Endothelial cell of umbilical vein (primary cell): ENCODE measurements at regions of chr22 and their contacts with region 1.

Region 1: DNA sequence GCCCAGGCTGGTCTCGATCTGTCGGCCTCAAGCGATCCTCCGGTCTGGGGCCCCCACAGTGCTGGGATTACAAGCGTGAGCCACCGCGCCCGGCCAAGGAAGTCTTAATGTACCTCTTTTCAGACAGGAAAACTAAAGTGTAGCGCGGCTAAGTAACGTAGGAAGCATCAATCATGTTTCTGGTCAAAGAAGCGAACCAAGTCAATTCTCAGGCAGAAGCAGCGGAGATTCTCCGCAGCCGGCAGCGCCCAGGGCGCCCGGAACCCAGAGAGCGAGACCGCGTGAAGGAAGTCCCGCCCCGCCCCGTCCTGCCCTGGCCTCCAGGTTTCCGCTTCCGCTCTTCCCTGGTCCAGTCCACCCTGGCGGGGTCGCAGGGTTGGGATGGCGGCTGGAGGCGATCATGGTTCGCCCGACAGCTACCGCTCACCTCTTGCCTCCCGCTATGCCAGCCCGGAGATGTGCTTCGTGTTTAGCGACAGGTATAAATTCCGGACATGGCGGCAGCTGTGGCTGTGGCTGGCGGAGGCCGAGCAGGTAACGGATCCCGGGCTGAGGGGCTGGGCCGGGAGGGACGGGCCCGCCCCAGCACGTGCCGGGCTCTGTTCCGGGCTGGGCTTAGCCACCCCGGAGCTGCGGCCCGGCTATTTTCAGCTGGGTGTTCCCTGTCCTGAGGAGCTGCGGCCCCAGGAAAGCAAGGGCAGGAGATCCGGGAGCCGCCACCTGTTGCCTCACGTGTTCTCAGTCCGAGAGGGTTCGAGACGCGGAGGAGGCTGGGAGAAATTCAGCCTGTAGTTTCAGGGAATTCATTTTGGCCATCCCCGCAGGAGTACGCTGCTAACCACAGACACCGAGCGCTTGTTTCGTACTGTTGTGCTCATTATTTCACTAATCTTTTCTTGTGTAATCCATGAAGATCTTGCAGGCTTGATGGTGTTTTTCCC is at the start of gene ADSL:
- DNase-seq: peak; percentile 85
- H3K4me3 ChIP-seq: peak within 1 kb of the TSS; percentile 76 to 98 (median 90)
- H3K27ac ChIP-seq: peak within 1 kb of the TSS; percentile 51
- H3K4me1 ChIP-seq: peaks cover 16% of the 10 kb centered on the region
- H3K27me3 ChIP-seq: no peaks in the 10 kb centered on the region
- CTCF ChIP-seq: peak in 1 of 2 donors; percentile 34
- POLR2A ChIP-seq: peak; percentile 97
- total RNA-seq, gene ADSL: 86.2 and 103 TPM in 2 replicates

Region 2: DNA sequence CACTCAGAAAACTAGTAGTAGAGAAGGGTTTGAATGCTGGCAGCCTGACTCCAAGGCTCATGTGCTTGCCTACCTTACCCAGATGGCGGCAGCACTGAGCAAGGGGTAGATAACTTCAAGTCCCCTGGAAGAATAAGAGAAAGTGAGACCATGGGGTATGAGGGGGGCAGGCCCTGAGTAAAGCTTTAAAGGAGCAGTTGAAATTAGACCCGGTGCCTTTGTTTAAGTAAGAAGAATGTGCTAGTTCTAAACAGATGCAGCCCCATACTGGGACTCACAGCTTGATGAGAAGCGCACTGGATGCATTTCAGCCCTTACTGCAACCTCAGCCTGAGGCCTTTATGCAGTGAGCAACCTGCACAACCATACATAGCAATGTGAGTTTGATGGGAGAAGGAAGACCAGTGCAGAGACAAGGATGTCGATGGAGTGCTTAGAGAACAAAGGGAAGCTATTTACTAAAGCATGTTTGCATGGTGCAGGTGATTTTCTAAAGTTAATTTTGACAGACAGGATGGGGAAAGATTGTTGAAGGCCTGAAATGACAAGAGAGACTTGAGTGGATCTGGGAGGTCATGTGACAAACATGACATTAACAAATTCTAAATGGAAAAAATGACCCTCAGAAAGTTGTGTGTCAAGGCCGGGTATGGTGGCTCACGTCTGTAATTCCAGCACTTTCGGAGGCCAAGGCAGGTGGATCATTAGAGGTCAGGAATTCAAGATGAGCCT is 413.4 kb before region 1 on chr22:
- CTCF ChIA-PET with region 1: no interaction called
- POLR2A ChIA-PET with region 1: no interaction called
- dilution Hi-C with region 1: no loop called
- intact Hi-C with region 1: loop called (anchors 2 kb)
- DNase-seq: peak; percentile 23
- H3K4me3 ChIP-seq: no peak overlapping the region
- H3K27ac ChIP-seq: no peak overlapping the region
- H3K4me1 ChIP-seq: no peaks in the 10 kb centered on the region
- H3K27me3 ChIP-seq: peaks cover 38 to 47% of the 10 kb centered on the region in 2 experiments
- CTCF ChIP-seq: peak; percentile 49 to 54
- POLR2A ChIP-seq: no peak

Region 3: DNA sequence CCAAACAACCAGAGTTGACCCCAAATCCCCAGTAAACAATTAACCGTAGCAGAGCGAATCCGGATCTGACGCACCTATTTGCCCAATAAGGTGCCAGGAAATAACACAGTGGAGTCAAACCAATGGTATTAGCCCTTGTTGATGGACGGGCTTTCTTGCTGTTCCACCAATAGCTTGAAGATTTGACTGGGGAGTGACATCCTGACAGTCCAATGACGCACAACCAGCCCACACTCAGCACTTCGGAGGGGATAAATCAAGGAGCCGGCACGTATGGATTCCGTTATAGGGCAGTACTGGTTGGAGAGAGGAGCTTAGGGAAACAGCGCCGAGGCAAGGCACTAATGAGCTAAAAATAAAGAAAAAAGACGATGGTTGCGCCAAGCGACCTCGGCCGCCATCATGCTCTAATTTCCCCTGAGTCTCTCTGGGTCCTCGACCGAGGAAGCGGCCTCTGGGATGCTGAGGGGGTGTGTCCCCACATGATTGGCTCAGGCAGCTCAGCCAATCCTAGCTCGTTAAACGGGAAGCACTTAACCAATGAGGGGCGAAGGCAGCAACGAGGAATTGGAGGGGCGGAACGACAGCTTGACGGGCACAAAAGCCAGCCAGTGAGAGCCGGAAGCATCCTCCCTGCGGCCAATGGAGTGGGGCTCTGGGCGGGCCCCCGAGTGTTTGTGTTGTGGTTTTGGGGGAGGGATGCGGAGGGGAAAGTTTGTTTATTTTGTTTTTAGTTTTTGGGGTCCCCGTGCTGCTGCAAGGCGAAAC is 302.2 kb before region 1 on chr22:
- CTCF ChIA-PET with region 1: interaction called, 31 read pairs
- POLR2A ChIA-PET with region 1: interaction called, 3 read pairs
- dilution Hi-C with region 1: no loop called
- intact Hi-C with region 1: loop called (anchors 1 kb)
- DNase-seq: peak; percentile 99
- H3K4me3 ChIP-seq: peak overlapping the region; percentile 48 to 95 (median 68)
- H3K27ac ChIP-seq: peak overlapping the region; percentile 87
- H3K4me1 ChIP-seq: peaks cover 19% of the 10 kb centered on the region
- H3K27me3 ChIP-seq: peaks cover 0 to 16% of the 10 kb centered on the region in 2 experiments
- CTCF ChIP-seq: no peak
- POLR2A ChIP-seq: no peak

Region 4: GRCh38 chr22:40161194-40161593 is 185.3 kb before region 1 on chr22:
- CTCF ChIA-PET with region 1: no interaction called
- POLR2A ChIA-PET with region 1: no interaction called
- dilution Hi-C with region 1: no loop called
- intact Hi-C with region 1: no loop called
- DNase-seq: no peak
- H3K4me3 ChIP-seq: no peak overlapping the region
- H3K27ac ChIP-seq: no peak overlapping the region
- H3K4me1 ChIP-seq: peaks cover 2% of the 10 kb centered on the region
- H3K27me3 ChIP-seq: no peaks in the 10 kb centered on the region
- CTCF ChIP-seq: no peak
- POLR2A ChIP-seq: no peak

Region 5: GRCh38 chr22:40177738-40178416 is 168.6 kb before region 1 on chr22 and contains the start of gene TNRC6B:
- CTCF ChIA-PET with region 1: interaction called, 33 read pairs
- POLR2A ChIA-PET with region 1: interaction called, 3 read pairs
- dilution Hi-C with region 1: no loop called
- intact Hi-C with region 1: loop called (anchors 1 kb)
- DNase-seq: peak; percentile 96
- H3K4me3 ChIP-seq: peak within 1 kb of the TSS; percentile 62 to 99 (median 93)
- H3K27ac ChIP-seq: peak within 1 kb of the TSS; percentile 90
- H3K4me1 ChIP-seq: peaks cover 37% of the 10 kb centered on the region
- H3K27me3 ChIP-seq: no peaks in the 10 kb centered on the region
- CTCF ChIP-seq: no peak
- POLR2A ChIP-seq: peak; percentile 99
- total RNA-seq, gene TNRC6B: 33.3 and 37.2 TPM in 2 replicates

Region 6: DNA sequence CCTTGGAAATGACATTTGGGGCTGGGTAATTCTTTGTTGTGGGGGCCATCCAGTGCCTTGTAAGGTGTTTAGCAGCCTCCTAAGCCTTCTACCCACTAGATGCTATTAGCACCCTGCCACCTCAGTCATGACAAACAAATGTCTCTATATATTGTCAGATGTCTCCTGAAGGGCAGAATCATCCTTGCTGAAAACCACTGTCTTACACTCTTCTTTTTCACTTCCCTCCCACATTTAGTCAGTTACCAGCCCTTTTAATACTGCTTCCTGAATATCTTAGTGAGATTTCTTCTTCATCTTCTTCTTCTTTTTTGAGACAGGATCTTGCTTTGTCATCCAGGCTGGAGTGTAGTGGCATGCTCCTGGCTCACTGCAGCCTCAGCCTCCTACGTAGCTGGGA is 135.6 kb before region 1 on chr22:
- CTCF ChIA-PET with region 1: interaction called, 17 read pairs
- POLR2A ChIA-PET with region 1: no interaction called
- dilution Hi-C with region 1: no loop called
- intact Hi-C with region 1: loop called (anchors 5 kb)
- DNase-seq: no peak
- H3K4me3 ChIP-seq: no peak overlapping the region
- H3K27ac ChIP-seq: no peak overlapping the region
- H3K4me1 ChIP-seq: peaks cover 24% of the 10 kb centered on the region
- H3K27me3 ChIP-seq: no peaks in the 10 kb centered on the region
- CTCF ChIP-seq: no peak
- POLR2A ChIP-seq: no peak

Region 7: DNA sequence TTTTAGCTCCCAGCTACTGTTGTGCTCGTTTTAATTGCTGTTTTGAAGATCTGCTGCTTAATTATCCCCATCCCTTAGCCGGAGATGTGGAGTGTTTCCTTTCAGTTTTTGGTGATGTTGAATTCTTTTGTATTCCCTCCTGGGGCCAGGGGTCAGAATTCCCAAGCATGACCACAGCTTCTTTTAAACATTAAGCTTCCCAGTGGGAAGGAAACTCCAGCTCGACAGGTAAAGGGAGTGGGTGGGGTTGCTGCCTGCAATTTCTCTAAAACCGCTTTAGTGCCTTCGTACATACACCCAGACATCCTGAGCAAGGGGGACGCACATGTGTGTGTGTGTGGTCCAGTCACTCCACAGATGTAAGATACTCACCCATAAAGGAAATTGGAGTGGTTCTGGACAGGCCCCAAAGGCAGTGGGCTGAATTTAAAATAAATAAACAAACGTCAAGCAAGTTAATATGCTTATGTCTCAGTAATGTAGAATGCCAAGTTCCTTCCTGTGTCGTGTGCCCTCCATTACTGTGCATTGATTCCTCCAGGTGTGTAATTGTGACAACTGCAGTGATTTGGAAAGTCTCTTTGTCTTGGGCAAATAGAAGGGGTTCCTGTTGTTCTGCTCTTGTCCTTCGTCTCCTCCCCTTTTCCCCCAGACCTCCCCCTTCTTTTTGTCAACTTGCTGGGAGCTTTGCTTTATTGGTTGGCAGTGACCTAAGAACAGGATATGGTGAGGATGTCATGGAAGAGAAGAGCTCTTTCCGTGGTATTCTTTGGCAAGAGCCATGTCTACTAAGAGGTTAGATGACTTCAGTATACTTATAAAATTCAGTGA is 19.3 kb before region 1 on chr22:
- CTCF ChIA-PET with region 1: interaction called, 16 read pairs
- POLR2A ChIA-PET with region 1: no interaction called
- dilution Hi-C with region 1: no loop called
- intact Hi-C with region 1: no loop called
- DNase-seq: peak; percentile 75
- H3K4me3 ChIP-seq: no peak overlapping the region
- H3K27ac ChIP-seq: peak overlapping the region; percentile 54
- H3K4me1 ChIP-seq: peaks cover 19% of the 10 kb centered on the region
- H3K27me3 ChIP-seq: no peaks in the 10 kb centered on the region
- CTCF ChIP-seq: no peak
- POLR2A ChIP-seq: no peak

Region 8: DNA sequence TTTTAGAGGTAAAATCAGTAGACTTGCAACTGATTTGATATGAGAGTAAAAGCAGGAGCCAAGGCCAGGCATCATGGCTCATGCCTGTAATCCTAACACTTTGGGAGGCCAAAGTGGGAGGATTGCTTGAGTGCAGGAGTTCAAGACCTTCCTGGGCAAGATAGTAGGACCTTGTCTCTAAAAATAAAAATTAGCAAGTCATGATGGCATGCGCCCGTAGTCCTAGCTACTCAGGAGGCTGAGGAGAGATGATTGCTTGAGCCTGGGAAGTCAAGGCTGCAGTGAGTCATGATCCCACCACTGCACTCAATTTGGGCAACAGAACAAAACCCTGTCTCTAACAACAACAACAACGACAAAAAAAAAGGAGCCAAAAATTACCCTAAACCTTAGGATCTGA is 37.5 kb after region 1 on chr22:
- CTCF ChIA-PET with region 1: no interaction called
- POLR2A ChIA-PET with region 1: no interaction called
- dilution Hi-C with region 1: no loop called
- intact Hi-C with region 1: no loop called
- DNase-seq: no peak
- H3K4me3 ChIP-seq: no peak overlapping the region
- H3K27ac ChIP-seq: no peak overlapping the region
- H3K4me1 ChIP-seq: peaks cover 3% of the 10 kb centered on the region
- H3K27me3 ChIP-seq: no peaks in the 10 kb centered on the region
- CTCF ChIP-seq: no peak
- POLR2A ChIP-seq: no peak